ENCODE measurements at regions of chr7 and their contacts with region 1.

Region 1: DNA sequence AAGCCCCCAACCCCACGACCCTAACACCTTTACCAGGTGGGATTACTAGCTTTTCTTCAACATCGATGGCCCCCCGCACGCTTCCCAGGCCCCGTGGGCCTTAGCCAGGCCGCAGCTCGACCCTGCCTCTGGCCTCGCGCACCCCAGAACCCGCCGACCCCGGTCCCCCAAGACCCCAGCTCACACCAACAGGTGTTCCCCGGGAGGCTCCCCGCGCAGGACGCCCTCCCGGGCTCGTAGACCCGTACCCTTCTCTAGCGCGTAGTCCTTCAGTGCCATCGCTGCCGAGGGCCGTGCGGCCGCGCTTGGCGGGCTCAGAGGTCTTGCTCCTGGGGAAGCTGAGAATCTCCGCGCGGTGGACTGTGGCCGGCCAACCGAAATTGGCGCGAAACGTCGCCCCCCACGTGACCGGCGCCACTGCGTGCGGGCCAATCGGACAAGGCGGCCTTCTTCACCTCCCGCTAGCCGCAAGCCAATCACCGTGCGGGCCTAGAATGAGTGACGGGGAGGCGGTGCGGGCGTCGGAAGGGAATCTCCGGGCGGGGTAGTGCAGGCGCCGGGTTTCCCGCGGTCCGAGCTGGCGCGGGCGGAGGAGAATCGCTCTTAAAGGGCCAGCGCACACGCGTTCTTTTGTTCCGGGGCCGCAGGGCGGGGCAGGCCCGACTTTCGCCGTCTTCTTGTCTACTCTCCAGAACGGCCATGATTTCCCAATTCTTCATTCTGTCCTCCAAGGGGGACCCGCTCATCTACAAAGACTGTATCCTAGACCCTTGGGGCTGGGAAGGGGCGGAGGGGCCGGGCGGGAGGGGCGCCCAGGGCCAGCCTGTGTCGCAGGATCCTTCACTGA is at the starts of genes AP4M1 and MCM7:
- DNase-seq: peak; percentile 90 to 97 (median 94)
- ATAC-seq: peak; percentile 86 to 87
- H3K4me3 Mint-ChIP-seq: peak within 1 kb of the TSS; percentile 91 to 97 (median 95)
- H3K27ac Mint-ChIP-seq: peak within 1 kb of the TSS; percentile 93 to 99 (median 97)
- H3K4me1 Mint-ChIP-seq: peaks cover 22 to 45% (median 42%) of the 10 kb centered on the region in 4 donors
- H3K27me3 Mint-ChIP-seq: no peaks in the 10 kb centered on the region
- polyA plus RNA-seq, gene AP4M1: 1.7 to 3.6 (median 2.3) TPM
- polyA plus RNA-seq, gene MCM7: 28.7 to 46.6 (median 40.1) TPM

Region 2: DNA sequence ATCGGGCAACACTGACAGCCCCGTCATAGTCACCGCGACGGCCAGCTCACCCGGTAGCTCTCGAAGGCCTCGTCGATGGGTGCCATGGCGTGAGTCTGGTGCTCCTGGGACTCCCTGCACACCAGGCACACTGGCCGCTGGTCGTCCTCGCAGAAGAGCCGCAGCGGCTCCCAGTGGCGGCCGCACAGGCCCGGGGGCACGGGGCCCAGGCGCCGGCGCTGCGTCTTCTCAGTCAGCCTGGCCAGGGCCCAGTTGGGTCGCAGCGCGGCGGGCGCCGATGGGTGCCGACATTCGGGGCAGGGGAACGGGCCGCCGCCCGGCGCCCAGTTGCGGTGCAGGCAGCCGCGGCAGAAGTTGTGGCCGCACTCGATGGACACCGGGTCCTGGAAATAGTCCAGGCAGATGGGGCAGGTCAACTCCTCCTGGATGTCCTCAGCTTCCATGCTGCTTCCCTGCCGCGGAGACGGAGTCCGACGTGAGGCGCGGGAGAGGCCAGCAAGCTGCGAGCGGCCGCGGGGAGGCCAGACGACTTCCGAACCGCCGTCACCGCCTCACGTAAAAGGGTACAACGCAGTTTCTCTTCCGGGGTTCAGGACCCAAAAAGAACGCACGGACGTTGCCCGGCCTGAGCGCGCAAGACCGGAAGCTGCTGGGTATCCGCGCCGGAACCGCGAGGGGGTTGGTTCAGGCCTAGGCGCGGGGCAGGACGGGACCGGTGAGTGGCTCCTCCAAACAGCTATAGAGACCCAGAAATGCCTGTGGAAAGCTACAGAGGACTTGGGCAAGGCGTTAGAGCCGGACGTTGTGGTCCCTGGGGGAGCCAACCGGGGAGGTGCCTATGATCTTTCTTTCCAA is 182.1 kb before region 1 on chr7 and contains the start of gene TRIM4:
- POLR2A ChIA-PET with region 1: interaction called, 26 read pairs
- DNase-seq: peak; percentile 76 to 94 (median 87)
- ATAC-seq: peak; percentile 97 to 98
- H3K4me3 Mint-ChIP-seq: peak within 1 kb of the TSS; percentile 89 to 98 (median 94)
- H3K27ac Mint-ChIP-seq: peak within 1 kb of the TSS; percentile 96 to 99 (median 98)
- H3K4me1 Mint-ChIP-seq: peaks cover 37 to 63% (median 54%) of the 10 kb centered on the region in 4 donors
- H3K27me3 Mint-ChIP-seq: no peaks in the 10 kb centered on the region
- polyA plus RNA-seq, gene TRIM4: 22.2 to 32.2 (median 31.0) TPM

Region 3: GRCh38 chr7:100081535-100082102 is 19.6 kb before region 1 on chr7 and contains the start of gene ZNF3:
- POLR2A ChIA-PET with region 1: interaction called, 68 read pairs
- DNase-seq: peak; percentile 93 to 99 (median 98)
- ATAC-seq: peak; percentile 85 to 90
- H3K4me3 Mint-ChIP-seq: peak within 1 kb of the TSS; percentile 86 to 95 (median 92)
- H3K27ac Mint-ChIP-seq: peak within 1 kb of the TSS; percentile 90 to 96 (median 94)
- H3K4me1 Mint-ChIP-seq: peaks cover 17 to 43% (median 38%) of the 10 kb centered on the region in 4 donors
- H3K27me3 Mint-ChIP-seq: no peaks in the 10 kb centered on the region
- polyA plus RNA-seq, gene ZNF3: 17.4 to 28.4 (median 20.2) TPM

Region 4: GRCh38 chr7:100088621-100089457 is 12.4 kb before region 1 on chr7 and contains the start of gene COPS6:
- POLR2A ChIA-PET with region 1: interaction called, 68 read pairs
- DNase-seq: peak; percentile 71 to 92 (median 86)
- ATAC-seq: peak; percentile 82 to 90
- H3K4me3 Mint-ChIP-seq: peak within 1 kb of the TSS; percentile 80 to 92 (median 90)
- H3K27ac Mint-ChIP-seq: peak within 1 kb of the TSS; percentile 92 to 98 (median 95)
- H3K4me1 Mint-ChIP-seq: peaks cover 13 to 28% (median 22%) of the 10 kb centered on the region in 4 donors
- H3K27me3 Mint-ChIP-seq: no peaks in the 10 kb centered on the region
- polyA plus RNA-seq, gene COPS6: 107 to 145 (median 121) TPM

Region 5: DNA sequence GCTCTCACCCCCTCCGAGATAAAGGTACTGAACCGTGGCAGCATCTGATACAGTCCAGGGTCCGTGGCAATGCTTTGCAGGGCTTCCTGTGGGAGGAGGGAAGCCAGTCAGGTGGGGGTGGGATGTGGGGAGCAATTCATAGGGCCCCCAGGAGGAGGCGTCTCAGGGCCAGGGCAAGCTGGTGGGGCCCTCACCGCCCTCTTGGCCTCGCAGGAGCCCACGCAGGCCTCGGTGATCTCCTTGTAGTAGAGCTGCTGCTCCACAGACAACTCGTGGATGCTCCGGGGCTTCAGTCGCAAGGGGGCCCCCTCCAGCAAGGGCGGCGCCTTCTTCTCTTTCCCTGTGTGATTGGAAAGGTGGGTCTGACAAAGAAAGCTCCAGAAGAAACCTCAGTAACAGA is 10.7 kb after region 1 on chr7:
- POLR2A ChIA-PET with region 1: interaction called, 252 read pairs
- DNase-seq: no peak
- ATAC-seq: no peak
- H3K4me3 Mint-ChIP-seq: no peak overlapping the region
- H3K27ac Mint-ChIP-seq: no peak overlapping the region
- H3K4me1 Mint-ChIP-seq: peaks cover 0 to 8% (median 5%) of the 10 kb centered on the region in 4 donors
- H3K27me3 Mint-ChIP-seq: no peaks in the 10 kb centered on the region

Region 6: GRCh38 chr7:100119062-100119700 is 17.9 kb after region 1 on chr7 and contains the starts of genes CNPY4 and TAF6:
- POLR2A ChIA-PET with region 1: interaction called, 252 read pairs
- DNase-seq: peak; percentile 90 to 97 (median 94)
- ATAC-seq: peak; percentile 72 to 74
- H3K4me3 Mint-ChIP-seq: peak within 1 kb of the TSS; percentile 91 to 99 (median 97)
- H3K27ac Mint-ChIP-seq: peak within 1 kb of the TSS; percentile 96 to 100 (median 99)
- H3K4me1 Mint-ChIP-seq: peaks cover 11 to 38% (median 29%) of the 10 kb centered on the region in 4 donors
- H3K27me3 Mint-ChIP-seq: no peaks in the 10 kb centered on the region
- polyA plus RNA-seq, gene CNPY4: 19.8 to 23.5 (median 20.6) TPM
- polyA plus RNA-seq, gene TAF6: 21.3 to 39.0 (median 31.5) TPM

Region 7: GRCh38 chr7:100221231-100221718 is 120.0 kb after region 1 on chr7:
- POLR2A ChIA-PET with region 1: interaction called, 15 read pairs
- DNase-seq: peak; percentile 54 to 94 (median 84)
- ATAC-seq: peak; percentile 62 to 80
- H3K4me3 Mint-ChIP-seq: peak overlapping the region; percentile 88 to 99 (median 96)
- H3K27ac Mint-ChIP-seq: peak overlapping the region; percentile 96 to 100 (median 98)
- H3K4me1 Mint-ChIP-seq: peaks cover 26 to 80% (median 71%) of the 10 kb centered on the region in 4 donors
- H3K27me3 Mint-ChIP-seq: peaks cover 0 to 2% (median 0%) of the 10 kb centered on the region in 5 donors

Measured in naive thymus-derived CD8-positive, alpha-beta T cell (primary cell).